Activated CD4-positive, alpha-beta memory T cell treated with anti-CD3 and anti-CD28 coated beads for 36 hours (primary cell): ENCODE measurements at regions of chr6 and their contacts with region 1.

Region 1: DNA sequence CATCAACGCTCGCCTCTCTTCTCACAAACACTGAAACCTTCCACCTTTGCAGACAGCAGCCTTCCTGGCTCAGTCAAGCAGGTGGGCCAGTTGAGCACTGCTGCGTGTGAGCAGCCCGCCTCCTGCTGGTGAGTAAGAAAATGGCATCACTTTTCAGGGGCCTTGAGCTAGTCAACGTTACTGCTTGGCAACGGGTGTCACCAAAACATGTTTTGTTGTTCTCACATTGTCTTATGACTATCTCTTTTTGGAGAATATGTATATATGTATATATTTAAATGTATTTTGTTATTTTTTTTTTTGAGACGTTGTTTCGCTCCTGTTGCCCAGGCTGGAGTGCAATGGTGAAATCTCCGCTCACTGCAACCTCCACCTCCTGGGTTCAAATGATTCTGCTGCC is 97.0 kb upstream of the AGPAT4 start:
- DNase-seq: peak; percentile 78
- H3K4me3 Mint-ChIP-seq: no peak overlapping the region
- H3K27ac Mint-ChIP-seq: no peak overlapping the region
- H3K4me1 Mint-ChIP-seq: no peaks in the 10 kb centered on the region
- H3K27me3 Mint-ChIP-seq: no peaks in the 10 kb centered on the region

Region 2: DNA sequence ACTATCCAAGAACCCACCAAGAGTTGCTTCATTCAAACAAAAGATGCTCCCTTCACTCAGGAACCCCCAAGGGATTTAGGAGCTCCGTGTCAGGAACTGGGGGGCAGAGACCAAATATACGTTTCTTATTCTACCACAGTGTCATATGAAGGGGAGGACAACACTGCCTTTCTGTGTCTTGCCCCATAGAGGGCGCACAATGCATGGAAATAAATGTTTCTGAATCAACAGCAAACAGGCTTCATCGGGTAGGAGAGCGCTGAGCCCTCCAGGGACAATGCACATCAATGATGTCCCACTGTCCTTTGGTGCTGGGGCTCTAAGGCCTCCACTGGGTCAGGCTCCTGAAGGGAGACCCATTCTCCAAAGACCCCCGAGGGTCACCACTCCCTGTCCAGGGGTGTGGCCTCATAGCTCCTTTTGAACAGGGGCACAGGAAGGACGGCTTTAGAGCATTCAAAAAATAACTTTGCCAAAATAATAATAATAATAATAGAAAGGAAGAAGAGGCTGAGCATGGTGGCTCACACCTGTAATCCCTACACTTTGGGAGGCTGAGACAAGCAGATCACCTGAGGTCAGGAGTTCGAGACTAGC is 637.7 kb before region 1 on chr6:
- CTCF ChIA-PET with region 1: interaction called, 56 read pairs
- POLR2A ChIA-PET with region 1: no interaction called
- intact Hi-C with region 1: loop called (anchors 1 kb)
- DNase-seq: peak; percentile 30
- H3K4me3 Mint-ChIP-seq: no peak overlapping the region
- H3K27ac Mint-ChIP-seq: no peak overlapping the region
- H3K4me1 Mint-ChIP-seq: no peaks in the 10 kb centered on the region
- H3K27me3 Mint-ChIP-seq: peaks cover 5% of the 10 kb centered on the region

Region 3: GRCh38 chr6:160919723-160920440 is 451.0 kb before region 1 on chr6:
- CTCF ChIA-PET with region 1: interaction called, 22 read pairs
- POLR2A ChIA-PET with region 1: no interaction called
- intact Hi-C with region 1: no loop called
- DNase-seq: no peak
- H3K4me3 Mint-ChIP-seq: no peak overlapping the region
- H3K27ac Mint-ChIP-seq: no peak overlapping the region
- H3K4me1 Mint-ChIP-seq: no peaks in the 10 kb centered on the region
- H3K27me3 Mint-ChIP-seq: peaks cover 5% of the 10 kb centered on the region

Region 4: GRCh38 chr6:160992061-160992979 is 378.6 kb before region 1 on chr6:
- CTCF ChIA-PET with region 1: interaction called, 9 read pairs
- POLR2A ChIA-PET with region 1: no interaction called
- intact Hi-C with region 1: loop called (anchors 2 kb)
- DNase-seq: peak; percentile 45
- H3K4me3 Mint-ChIP-seq: peak overlapping the region; percentile 87
- H3K27ac Mint-ChIP-seq: peak overlapping the region; percentile 88
- H3K4me1 Mint-ChIP-seq: peaks cover 40% of the 10 kb centered on the region
- H3K27me3 Mint-ChIP-seq: peaks cover 2% of the 10 kb centered on the region

Region 5: DNA sequence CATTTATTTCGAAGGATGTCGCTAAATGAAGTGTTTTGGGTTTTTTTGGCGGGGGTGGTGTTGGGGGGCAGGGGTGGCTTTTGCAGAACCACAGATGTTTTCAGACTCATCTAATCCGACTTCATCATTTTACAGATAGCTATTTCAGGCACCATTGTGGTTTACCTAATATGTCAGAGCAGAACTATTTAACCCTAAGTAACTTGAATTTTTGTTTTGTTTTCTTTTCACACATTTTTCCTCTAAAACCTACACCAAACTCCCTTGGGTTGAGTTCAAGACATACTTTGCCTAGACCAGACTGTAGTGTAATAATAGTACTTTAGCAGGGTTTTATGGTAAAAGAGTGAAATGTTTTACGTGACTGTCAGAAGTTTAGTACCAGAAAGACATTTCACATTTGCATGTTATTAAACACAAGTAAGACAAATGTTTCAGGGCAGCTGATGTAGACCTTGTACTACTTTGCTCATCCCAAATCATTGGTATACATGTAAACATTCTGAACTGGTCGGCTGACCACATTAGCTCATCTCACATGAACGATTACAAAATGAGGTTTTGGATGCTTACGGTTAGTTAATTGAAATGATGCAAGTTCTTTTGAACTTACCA is 341.6 kb before region 1 on chr6:
- CTCF ChIA-PET with region 1: no interaction called
- POLR2A ChIA-PET with region 1: no interaction called
- intact Hi-C with region 1: no loop called
- DNase-seq: peak; percentile 28
- H3K4me3 Mint-ChIP-seq: no peak overlapping the region
- H3K27ac Mint-ChIP-seq: no peak overlapping the region
- H3K4me1 Mint-ChIP-seq: peaks cover 52% of the 10 kb centered on the region
- H3K27me3 Mint-ChIP-seq: no peaks in the 10 kb centered on the region

Region 6: GRCh38 chr6:161152907-161153662 is 217.8 kb before region 1 on chr6:
- CTCF ChIA-PET with region 1: interaction called, 26 read pairs
- POLR2A ChIA-PET with region 1: no interaction called
- intact Hi-C with region 1: loop called (anchors 1 kb)
- DNase-seq: peak; percentile 26
- H3K4me3 Mint-ChIP-seq: no peak overlapping the region
- H3K27ac Mint-ChIP-seq: no peak overlapping the region
- H3K4me1 Mint-ChIP-seq: no peaks in the 10 kb centered on the region
- H3K27me3 Mint-ChIP-seq: no peaks in the 10 kb centered on the region

Region 7: GRCh38 chr6:161359618-161359945 is 11.3 kb before region 1 on chr6:
- CTCF ChIA-PET with region 1: interaction called, 15 read pairs
- POLR2A ChIA-PET with region 1: no interaction called
- intact Hi-C with region 1: no loop called
- DNase-seq: no peak
- H3K4me3 Mint-ChIP-seq: no peak overlapping the region
- H3K27ac Mint-ChIP-seq: no peak overlapping the region
- H3K4me1 Mint-ChIP-seq: no peaks in the 10 kb centered on the region
- H3K27me3 Mint-ChIP-seq: no peaks in the 10 kb centered on the region

Region 8: GRCh38 chr6:161439093-161439492 is 68.2 kb after region 1 on chr6:
- CTCF ChIA-PET with region 1: no interaction called
- POLR2A ChIA-PET with region 1: no interaction called
- intact Hi-C with region 1: no loop called
- DNase-seq: peak; percentile 26
- H3K4me3 Mint-ChIP-seq: no peak overlapping the region
- H3K27ac Mint-ChIP-seq: no peak overlapping the region
- H3K4me1 Mint-ChIP-seq: no peaks in the 10 kb centered on the region
- H3K27me3 Mint-ChIP-seq: peaks cover 4% of the 10 kb centered on the region